IMR-90 (cell line): ENCODE measurements at regions of chr1 and their contacts with region 1.

Region 1: DNA sequence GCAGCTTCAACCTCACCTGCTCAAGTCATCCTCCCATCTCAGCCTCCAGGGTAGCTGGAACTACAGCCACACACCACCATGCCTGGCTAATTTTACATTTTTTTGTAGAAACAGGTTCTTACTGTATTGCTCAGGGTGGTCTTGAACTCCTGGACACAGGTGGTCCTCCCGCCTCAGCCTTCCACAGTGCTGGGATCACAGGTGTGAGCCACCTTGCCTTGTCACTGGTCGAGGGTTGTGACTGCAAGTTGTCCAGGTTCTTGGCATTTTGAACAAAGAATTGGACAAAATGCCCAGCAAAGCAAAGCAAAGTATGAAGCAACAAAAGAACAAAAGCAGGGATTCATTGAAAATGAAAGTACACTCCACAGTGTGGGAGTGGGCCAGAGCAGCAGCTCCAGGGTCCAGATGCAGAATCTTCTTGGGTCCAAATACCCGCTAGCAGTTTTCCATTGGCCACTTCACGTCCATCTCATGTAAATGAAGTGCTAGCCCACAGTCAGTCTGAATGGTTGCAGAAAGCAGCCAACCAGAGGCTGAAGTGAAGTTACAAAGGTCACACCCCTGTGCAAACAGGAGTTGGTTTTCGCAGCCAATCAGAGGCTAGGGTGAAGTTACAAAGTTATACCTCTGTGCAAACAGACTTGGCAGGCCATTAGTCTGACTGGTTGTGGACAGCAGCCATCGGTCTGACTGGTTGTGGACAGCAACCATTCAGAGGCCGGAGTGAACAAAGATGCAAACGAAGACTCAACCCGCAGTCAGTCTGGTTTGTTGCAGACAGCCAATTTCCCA is 109.5 kb upstream of the KIF26B start:
- DNase-seq: peak; percentile 27
- ATAC-seq: peak; percentile 33
- H3K4me3 ChIP-seq: no peak overlapping the region
- H3K27ac ChIP-seq: no peak overlapping the region
- H3K4me1 ChIP-seq: no peaks in the 10 kb centered on the region; the same call in 1 of the 2 replicates
- H3K27me3 ChIP-seq: no peaks in the 10 kb centered on the region
- CTCF ChIP-seq: no peak
- POLR2A ChIP-seq: no peak
- RAD21 ChIP-seq: no peak

Region 2: DNA sequence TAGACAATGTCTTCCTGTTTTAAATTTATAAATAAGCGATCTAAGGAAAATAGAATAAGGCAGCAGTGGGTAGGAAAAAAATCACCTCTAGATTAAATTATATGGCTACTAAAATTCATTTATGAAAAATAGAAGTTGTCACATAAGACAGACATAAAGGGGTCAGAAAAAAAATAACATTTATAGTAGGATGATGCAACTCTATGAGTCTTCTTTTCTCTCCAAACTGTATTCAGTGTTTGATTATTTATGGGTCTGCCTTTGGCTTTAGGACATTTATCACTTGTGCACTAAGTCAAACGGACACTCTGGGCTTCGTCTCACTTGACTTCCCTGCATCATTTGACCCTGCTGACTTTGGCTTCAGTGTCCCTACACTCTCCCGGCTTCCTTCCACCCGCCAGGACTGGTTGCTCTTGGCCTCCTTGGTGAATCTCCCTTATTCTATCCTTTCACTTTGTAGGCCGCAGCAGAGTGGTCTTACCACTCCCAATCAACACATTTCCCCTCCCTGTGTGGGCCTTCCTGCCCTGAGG is 439.4 kb before region 1 on chr1:
- CTCF ChIA-PET with region 1: no interaction called
- POLR2A ChIA-PET with region 1: no interaction called
- dilution Hi-C with region 1: no loop called
- in situ Hi-C with region 1: loop called (anchors 5 kb)
- intact Hi-C with region 1: loop called (anchors 2 kb)
- DNase-seq: no peak
- ATAC-seq: no peak
- H3K4me3 ChIP-seq: no peak overlapping the region
- H3K27ac ChIP-seq: no peak overlapping the region
- H3K4me1 ChIP-seq: peaks cover 3% of the 10 kb centered on the region; the same call in 1 of the 2 replicates
- H3K27me3 ChIP-seq: peaks cover 7% of the 10 kb centered on the region
- CTCF ChIP-seq: no peak
- POLR2A ChIP-seq: no peak
- RAD21 ChIP-seq: no peak

Region 3: GRCh38 chr1:244835276-244836134 is 209.8 kb before region 1 on chr1 and contains the start of gene COX20:
- CTCF ChIA-PET with region 1: interaction called, 6 read pairs
- POLR2A ChIA-PET with region 1: no interaction called
- dilution Hi-C with region 1: no loop called
- in situ Hi-C with region 1: loop called (anchors 10 kb)
- intact Hi-C with region 1: loop called (anchors 2 kb)
- DNase-seq: peak; percentile 88
- ATAC-seq: peak; percentile 75
- H3K4me3 ChIP-seq: peak within 1 kb of the TSS; percentile 68
- H3K27ac ChIP-seq: peak within 1 kb of the TSS; percentile 97
- H3K4me1 ChIP-seq: peaks cover 5% of the 10 kb centered on the region
- H3K27me3 ChIP-seq: no peaks in the 10 kb centered on the region
- CTCF ChIP-seq: no peak
- POLR2A ChIP-seq: peak; percentile 86
- RAD21 ChIP-seq: no peak
- total RNA-seq, gene COX20: 13.3 and 26.9 TPM in 2 replicates

Region 4: DNA sequence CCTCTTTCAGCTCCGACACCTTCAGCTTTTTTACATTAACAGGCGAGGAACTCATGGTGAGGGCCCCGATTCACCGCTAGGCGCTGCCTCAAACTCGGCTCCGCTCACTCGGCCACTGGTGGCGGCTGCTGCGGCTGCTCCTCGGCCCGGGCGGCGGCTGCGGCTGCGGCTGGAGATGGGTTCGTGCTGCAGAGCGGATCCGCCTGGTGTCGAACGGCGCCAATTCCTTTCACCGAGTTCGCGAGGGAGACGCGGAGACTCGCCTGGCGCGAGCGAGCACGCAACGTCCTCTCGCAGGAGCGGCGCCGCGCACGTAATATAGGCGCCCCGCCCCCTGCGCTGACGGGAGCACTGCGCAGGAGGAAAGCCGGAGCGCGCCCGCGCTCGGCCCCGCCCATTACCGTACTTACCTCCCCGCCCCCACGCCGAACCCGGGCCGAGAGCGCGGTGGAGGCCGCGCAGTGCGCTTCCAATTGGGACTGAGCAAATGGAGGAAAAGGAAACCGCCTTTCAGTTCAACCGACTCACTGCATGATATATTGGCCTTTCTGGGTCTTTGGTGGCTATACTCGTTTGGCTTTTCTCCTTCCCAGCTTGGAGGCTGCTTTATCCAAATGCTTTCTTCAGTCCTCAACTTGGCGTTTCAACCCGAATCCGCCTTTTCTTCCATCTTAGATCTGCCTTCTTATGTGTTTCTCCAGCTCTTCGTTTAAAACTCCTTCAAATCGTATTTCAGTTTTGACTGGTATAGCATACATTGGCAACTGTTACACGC is 180.8 kb before region 1 on chr1 and contains the start of gene HNRNPU:
- CTCF ChIA-PET with region 1: interaction called, 10 read pairs
- POLR2A ChIA-PET with region 1: no interaction called
- dilution Hi-C with region 1: no loop called
- in situ Hi-C with region 1: no loop called
- intact Hi-C with region 1: loop called (anchors 1 kb)
- DNase-seq: peak; percentile 97
- ATAC-seq: peak; percentile 87
- H3K4me3 ChIP-seq: peak within 1 kb of the TSS; percentile 74
- H3K27ac ChIP-seq: peak within 1 kb of the TSS; percentile 99
- H3K4me1 ChIP-seq: peaks cover 9% of the 10 kb centered on the region
- H3K27me3 ChIP-seq: no peaks in the 10 kb centered on the region
- CTCF ChIP-seq: peak; percentile 22; the same call in 1 of the 2 replicates
- POLR2A ChIP-seq: peak; percentile 97
- RAD21 ChIP-seq: peak; percentile 7; the same call in 1 of the 2 replicates
- total RNA-seq, gene HNRNPU: 151 and 343 TPM in 2 replicates

Region 5: DNA sequence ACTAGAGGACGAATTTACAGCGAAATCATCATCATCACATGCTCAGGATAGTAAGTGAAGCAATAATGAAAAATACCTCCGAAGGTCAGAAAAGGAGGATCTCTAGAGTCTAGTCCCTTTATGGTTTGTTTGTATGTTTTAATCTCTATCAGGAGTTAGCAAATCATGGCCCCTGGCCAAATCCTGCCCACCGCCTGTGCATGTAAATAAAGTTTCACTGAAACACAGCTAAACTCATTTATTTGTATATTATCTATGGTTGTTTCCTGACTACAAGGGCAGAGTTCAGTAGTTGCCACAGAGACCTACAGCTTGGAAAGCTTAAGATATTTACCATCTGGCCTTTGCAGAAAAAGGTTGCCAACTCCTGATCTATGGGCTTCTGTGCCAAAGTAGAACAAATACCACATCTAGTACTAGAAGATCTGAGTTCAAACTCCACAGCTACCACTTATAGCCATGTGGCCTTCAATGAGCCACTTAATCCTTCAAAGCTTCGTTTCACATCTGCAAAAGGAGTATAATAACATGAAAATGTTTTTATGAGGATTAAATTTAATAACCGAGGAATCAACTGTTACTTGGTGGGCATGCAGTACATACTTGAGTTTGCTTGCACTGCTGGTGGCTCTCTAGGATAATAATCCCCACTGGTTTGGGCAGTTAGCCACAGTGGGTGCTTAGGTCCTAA is 15.5 kb after region 1 on chr1:
- CTCF ChIA-PET with region 1: interaction called, 9 read pairs
- POLR2A ChIA-PET with region 1: interaction called, 12 read pairs
- dilution Hi-C with region 1: no loop called
- in situ Hi-C with region 1: no loop called
- intact Hi-C with region 1: no loop called
- DNase-seq: peak; percentile 38
- ATAC-seq: peak; percentile 76
- H3K4me3 ChIP-seq: no peak overlapping the region
- H3K27ac ChIP-seq: no peak overlapping the region
- H3K4me1 ChIP-seq: no peaks in the 10 kb centered on the region
- H3K27me3 ChIP-seq: no peaks in the 10 kb centered on the region
- CTCF ChIP-seq: no peak
- POLR2A ChIP-seq: no peak
- RAD21 ChIP-seq: no peak